GM12878 (cell line): ENCODE measurements at regions of chrX and their contacts with region 1.

Region 1: GRCh38 chrX:109187473-109188168 is 294.3 kb downstream of the GUCY2F start:
- DNase-seq: no peak
- ATAC-seq: peak; percentile 87
- H3K4me3 ChIP-seq: no peak overlapping the region
- H3K27ac ChIP-seq: no peak overlapping the region
- H3K4me1 ChIP-seq: peaks cover 4% of the 10 kb centered on the region; the same call in 1 of the 2 replicates
- H3K27me3 ChIP-seq: no peaks in the 10 kb centered on the region
- CTCF ChIP-seq: no peak
- EP300 ChIP-seq: peak in 1 of 2 experiments; percentile 36; a peak in 1 of 4 replicates
- POLR2A ChIP-seq: no peak
- RAD21 ChIP-seq: no peak

Region 2: DNA sequence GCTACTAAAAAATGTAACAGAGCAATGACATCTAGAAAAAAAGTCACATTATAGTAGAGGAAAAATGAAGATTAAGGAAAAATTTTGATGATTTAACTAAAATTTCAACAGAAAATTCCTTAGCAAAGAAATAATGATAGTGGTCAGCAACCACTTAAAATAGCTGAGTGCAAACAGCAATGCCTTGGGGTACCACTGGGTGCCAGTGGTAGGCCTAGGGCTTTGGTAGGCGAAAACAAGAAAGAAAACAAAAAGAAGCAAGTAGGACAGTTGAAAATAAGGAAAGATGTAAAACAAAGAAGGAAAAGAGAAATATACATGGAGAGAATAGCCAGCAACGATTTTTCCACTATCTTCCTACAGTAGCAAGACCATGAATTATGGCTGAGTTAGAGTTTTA is 137.7 kb before region 1 on chrX:
- CTCF ChIA-PET with region 1: interaction called, 4 read pairs
- POLR2A ChIA-PET with region 1: no interaction called
- RAD21 ChIA-PET with region 1: interaction called, 11 read pairs
- SMC1A ChIA-PET with region 1: interaction called, 8 read pairs
- in situ Hi-C with region 1: no loop called
- intact Hi-C with region 1: no loop called
- DNase-seq: no peak
- ATAC-seq: peak; percentile 71
- H3K4me3 ChIP-seq: no peak overlapping the region
- H3K27ac ChIP-seq: no peak overlapping the region
- H3K4me1 ChIP-seq: no peaks in the 10 kb centered on the region
- H3K27me3 ChIP-seq: no peaks in the 10 kb centered on the region
- CTCF ChIP-seq: peak; percentile 26 to 44 (median 33); a peak in 5 of 6 replicates
- EP300 ChIP-seq: no peak
- POLR2A ChIP-seq: no peak
- RAD21 ChIP-seq: peak; percentile 53

Region 3: DNA sequence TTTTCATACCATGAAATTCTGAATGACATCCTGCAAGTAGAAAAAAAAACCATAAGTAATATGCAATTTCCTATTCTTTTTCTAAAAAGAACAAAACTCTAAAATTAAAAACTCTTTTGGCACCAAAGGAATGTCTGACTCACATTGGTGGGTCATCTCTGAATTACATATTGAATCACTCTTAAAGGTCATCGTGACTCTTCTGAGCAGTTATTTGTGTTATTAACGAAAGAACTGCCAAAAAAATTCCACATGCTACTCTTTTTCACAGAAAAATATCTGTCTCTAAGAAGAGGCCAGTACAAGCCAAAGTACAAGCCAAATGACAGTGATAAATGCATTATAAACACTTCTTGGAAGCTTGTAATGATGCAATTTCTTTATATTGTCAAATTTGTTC is 12.1 kb after region 1 on chrX:
- CTCF ChIA-PET with region 1: no interaction called
- POLR2A ChIA-PET with region 1: no interaction called
- RAD21 ChIA-PET with region 1: interaction called, 3 read pairs
- SMC1A ChIA-PET with region 1: interaction called, 10 read pairs
- in situ Hi-C with region 1: no loop called
- intact Hi-C with region 1: no loop called
- DNase-seq: no peak
- ATAC-seq: no peak
- H3K4me3 ChIP-seq: no peak overlapping the region
- H3K27ac ChIP-seq: no peak overlapping the region
- H3K4me1 ChIP-seq: no peaks in the 10 kb centered on the region
- H3K27me3 ChIP-seq: no peaks in the 10 kb centered on the region
- CTCF ChIP-seq: no peak
- EP300 ChIP-seq: no peak
- POLR2A ChIP-seq: no peak
- RAD21 ChIP-seq: no peak

Region 4: DNA sequence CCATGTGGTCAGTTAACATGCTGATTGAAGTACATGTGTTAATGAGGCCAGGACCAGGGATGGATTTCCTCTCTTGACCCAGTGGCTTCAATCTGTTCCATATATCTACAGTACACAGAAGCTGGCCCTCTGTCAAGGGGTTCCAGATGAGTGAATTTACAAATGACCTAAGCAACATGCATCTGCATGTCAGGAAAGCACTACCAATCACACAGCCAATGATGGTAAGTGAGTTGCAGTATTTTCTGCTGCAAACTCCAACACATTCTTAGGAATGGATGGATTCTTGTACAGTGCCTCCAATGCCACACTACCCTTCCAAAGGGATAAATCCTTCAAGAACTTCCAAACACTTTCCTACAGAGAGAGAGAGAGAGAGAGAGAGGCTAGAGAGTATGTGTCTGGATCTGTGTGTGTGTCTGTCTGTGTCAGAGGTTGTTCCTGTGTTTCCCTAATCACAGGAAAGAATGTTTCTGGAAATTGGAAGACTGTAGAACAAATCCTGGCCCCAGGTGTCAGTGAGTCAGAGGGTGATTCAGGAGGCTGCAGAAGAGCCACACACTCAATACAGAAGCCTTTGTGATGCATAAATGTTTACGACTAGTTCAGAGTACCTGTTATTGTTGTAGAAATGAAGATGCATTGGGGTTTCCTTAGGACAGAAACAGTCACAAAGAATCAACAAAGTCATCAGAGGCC is 186.8 kb after region 1 on chrX:
- CTCF ChIA-PET with region 1: interaction called, 4 read pairs
- POLR2A ChIA-PET with region 1: no interaction called
- RAD21 ChIA-PET with region 1: interaction called, 7 read pairs
- SMC1A ChIA-PET with region 1: interaction called, 14 read pairs
- in situ Hi-C with region 1: no loop called
- intact Hi-C with region 1: no loop called
- DNase-seq: no peak
- ATAC-seq: no peak; the same call in 2 of the 3 replicates
- H3K4me3 ChIP-seq: no peak overlapping the region
- H3K27ac ChIP-seq: no peak overlapping the region
- H3K4me1 ChIP-seq: no peaks in the 10 kb centered on the region
- H3K27me3 ChIP-seq: no peaks in the 10 kb centered on the region
- CTCF ChIP-seq: no peak
- EP300 ChIP-seq: no peak
- POLR2A ChIP-seq: no peak
- RAD21 ChIP-seq: no peak